GM10248 (cell line): ENCODE measurements at regions of chr13 and their contacts with region 1.

Region 1: DNA sequence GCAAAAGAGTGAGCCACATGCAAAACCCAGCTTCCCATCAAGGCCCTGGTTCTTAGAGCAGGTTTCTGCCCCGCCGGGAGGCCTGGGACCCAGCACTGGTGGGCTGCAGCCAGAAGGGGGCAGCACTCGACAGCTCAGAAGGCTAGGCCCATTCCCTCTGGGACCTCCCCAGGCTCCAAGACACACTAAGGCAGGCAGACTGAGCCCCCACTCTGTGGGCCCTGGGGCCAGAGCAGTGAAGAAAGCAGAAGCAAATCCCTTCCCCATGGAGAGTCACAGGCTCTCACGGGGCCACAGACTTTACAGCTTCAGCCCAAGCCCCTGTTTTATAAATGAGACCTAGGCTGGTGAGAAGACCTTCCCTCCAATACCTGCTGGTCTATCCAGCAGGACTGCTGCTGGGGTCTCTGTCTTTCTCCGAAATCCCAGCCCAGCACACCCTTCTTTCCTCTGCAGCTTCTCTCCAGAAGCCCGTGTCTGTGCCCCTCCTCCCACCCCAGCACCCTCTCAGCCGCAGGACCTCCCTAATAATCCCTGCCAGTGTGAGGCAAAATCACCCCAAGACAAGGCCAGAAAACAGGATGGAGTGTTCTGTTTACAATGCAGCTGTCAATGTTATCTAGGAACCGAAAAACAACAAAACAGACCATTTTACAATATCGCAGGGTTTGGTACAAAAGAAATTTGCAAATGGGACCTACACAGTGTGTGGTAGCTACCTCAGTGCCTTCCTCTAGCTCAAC is 109.3 kb downstream of the ABCC4 start:
- DNase-seq: peak; percentile 74
- CTCF ChIP-seq: peak; percentile 91

Region 2: DNA sequence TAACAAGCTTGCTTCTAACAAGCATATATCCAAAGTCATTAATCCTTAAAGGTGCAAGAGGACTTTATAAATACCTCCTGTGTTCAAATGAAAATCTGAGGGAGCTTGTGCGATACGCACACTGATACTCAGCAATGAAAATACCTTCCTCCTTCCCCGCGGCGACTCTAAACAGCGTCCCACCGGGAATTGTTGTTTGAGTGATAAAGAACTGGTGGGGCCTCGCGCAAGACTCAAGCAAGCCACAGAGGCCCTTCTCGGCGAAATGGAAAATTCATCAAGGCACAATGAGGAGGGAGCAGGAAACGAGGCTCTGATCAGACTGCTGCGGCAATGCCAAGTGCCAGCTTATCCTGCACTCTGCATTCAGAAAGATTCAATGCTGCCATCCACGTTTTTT is 17.5 kb before region 1 on chr13:
- CTCF ChIA-PET with region 1: interaction called, 10 read pairs
- POLR2A ChIA-PET with region 1: no interaction called
- DNase-seq: no peak
- CTCF ChIP-seq: no peak

Region 3: GRCh38 chr13:95207769-95208366 is 15.9 kb after region 1 on chr13:
- CTCF ChIA-PET with region 1: interaction called, 21 read pairs
- POLR2A ChIA-PET with region 1: no interaction called
- DNase-seq: peak; percentile 28
- CTCF ChIP-seq: no peak

Region 4: GRCh38 chr13:95289020-95289444 is 97.0 kb after region 1 on chr13:
- CTCF ChIA-PET with region 1: interaction called, 12 read pairs
- POLR2A ChIA-PET with region 1: no interaction called
- DNase-seq: no peak
- CTCF ChIP-seq: no peak

Region 5: DNA sequence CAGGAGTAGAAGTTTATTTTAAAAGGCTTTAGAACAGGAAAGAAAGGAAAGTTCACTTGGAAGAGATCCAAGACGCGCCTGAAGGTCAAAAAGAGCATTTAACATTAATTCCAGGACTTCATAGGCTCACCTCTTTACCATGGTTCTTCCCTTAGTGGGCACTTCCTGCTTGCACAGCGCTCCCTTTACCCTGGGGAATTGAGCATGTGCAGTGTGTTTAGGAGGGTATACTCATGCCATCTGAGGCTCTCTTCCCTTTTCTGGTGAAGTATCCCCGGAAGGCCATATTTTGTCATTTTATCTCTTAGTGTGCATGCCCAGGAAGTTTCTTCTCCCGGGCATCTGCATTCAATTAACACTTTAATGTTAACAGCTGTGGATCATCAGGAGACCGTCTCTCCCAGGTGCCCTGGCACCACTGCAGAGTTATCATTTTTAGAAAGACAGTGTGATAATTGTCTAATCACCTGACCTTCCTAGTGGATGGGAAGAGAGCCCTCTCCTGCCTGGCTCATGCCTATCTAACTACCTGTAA is 175.4 kb after region 1 on chr13:
- CTCF ChIA-PET with region 1: interaction called, 298 read pairs
- POLR2A ChIA-PET with region 1: no interaction called
- DNase-seq: no peak
- CTCF ChIP-seq: no peak

Region 6: DNA sequence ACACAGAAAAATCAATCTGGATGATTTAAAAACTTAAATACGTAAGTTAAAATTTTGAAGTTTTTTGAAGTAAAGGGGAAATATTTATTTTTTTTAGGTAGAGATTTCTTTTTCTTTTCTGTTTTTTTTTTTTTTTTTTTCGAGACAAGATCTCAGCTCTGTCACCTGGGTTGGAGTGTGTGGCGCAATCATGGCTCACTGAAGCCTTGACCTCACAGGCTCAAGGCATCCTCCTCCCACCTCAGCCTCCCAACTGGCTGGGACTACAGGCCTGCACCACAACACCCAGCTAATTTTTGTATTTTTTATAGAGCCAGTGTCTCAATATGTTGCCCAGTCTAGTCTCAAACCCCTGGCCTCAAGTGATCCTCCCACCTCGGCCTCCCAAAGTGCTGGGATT is 240.1 kb after region 1 on chr13:
- CTCF ChIA-PET with region 1: interaction called, 10 read pairs
- POLR2A ChIA-PET with region 1: no interaction called
- DNase-seq: no peak
- CTCF ChIP-seq: no peak